RWPE1 (cell line): ENCODE measurements at regions of chr1 and their contacts with region 1.

Region 1: GRCh38 chr1:79431340-79431739 is 424.8 kb upstream of the ADGRL4 start:
- DNase-seq: no peak
- H3K27ac ChIP-seq: no peak overlapping the region
- CTCF ChIP-seq: no peak

Region 2: GRCh38 chr1:79293611-79294010 is 137.7 kb before region 1 on chr1:
- CTCF ChIA-PET with region 1: no interaction called
- POLR2A ChIA-PET with region 1: no interaction called
- DNase-seq: peak; percentile 18
- H3K27ac ChIP-seq: no peak overlapping the region
- CTCF ChIP-seq: no peak

Region 3: DNA sequence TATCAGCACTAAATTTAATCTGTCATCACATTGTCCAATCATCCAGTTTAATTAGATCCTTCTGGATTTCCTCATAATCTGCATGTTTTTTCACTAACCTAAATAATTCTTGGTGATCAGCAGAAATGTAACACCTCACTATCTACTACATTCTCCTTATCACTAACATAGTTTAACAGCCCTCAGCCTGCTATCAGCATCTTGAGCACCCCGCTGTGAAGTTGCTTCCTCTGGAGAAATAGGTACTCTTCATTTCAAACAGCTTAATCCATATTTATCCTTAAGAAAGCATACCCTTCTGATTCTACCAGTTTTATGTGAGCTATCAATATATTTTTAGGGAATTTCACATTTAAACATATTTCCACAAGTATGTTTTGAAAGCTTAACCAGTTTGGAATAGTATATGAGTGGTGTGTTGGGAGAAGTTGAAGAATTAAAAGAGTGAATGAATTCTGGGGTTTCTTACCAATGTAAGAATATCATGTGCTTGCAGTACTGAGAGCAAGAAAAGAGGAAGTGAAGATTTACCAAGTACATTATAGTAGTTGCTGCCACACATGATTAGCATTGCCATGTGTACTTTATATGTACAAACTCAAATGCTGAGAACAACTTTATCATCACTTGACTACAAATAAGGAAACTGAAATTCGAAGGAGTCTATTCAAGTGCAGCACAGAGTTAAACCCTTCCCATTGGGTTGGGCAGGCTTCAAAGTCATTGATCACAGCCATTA is 346.3 kb after region 1 on chr1:
- CTCF ChIA-PET with region 1: no interaction called
- POLR2A ChIA-PET with region 1: interaction called, 12 read pairs
- DNase-seq: no peak
- H3K27ac ChIP-seq: no peak overlapping the region
- CTCF ChIP-seq: no peak